CD4-positive, alpha-beta memory T cell (primary cell): ENCODE measurements at regions of chr7 and their contacts with region 1.

Region 1: DNA sequence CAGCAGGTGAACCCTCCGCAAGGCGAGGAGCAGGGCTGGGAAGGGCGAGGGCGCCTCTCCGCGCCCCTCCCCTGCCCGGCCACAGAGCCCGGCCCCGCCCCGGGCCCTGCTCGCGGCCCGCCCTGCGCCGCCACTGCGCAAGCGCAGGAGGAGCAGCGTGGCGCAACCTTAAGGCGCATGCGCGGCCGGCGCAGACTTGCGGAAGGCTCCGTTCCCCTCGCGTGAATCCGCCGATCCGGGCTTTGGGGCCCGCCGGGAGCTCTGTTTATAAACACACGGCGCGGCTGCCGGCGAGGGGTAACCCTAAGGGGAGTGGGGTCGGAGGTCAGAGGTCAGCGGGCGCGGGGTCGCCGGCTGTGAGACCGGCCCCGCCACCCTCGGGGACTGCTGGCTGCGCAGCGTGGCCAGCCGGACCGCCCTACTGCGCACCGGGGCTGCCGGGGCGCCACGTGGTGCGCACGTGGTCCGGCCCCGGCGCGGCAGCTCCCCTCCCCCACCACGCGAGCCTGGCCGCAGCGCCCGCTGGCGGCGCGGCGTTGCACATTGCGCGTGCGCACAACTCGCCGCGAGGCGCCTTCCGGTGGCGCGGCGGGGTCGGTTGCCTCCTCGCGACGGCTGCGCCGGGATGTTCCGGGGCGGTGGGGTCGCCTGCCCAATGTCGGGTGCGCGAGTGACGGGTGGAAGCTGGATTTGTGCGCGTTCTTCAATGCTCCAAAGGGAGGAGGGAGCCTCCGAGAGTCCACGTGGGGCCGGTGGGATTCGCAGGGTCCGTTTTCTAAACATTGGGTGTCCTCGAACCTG is 40.2 kb upstream of the FOXK1 start:
- DNase-seq: peak; percentile 94 to 99 (median 98)
- H3K4me3 ChIP-seq: peak overlapping the region; percentile 70 to 74
- H3K4me3 Mint-ChIP-seq: peak overlapping the region; percentile 83 to 92 (median 87)
- H3K27ac ChIP-seq: peak overlapping the region; percentile 60
- H3K27ac Mint-ChIP-seq: peak overlapping the region; percentile 93 to 97 (median 95)
- H3K4me1 ChIP-seq: peaks cover 16% of the 10 kb centered on the region
- H3K4me1 Mint-ChIP-seq: peaks cover 9 to 19% (median 14%) of the 10 kb centered on the region in 4 donors
- H3K27me3 ChIP-seq: no peaks in the 10 kb centered on the region
- H3K27me3 Mint-ChIP-seq: no peaks in the 10 kb centered on the region

Region 2: DNA sequence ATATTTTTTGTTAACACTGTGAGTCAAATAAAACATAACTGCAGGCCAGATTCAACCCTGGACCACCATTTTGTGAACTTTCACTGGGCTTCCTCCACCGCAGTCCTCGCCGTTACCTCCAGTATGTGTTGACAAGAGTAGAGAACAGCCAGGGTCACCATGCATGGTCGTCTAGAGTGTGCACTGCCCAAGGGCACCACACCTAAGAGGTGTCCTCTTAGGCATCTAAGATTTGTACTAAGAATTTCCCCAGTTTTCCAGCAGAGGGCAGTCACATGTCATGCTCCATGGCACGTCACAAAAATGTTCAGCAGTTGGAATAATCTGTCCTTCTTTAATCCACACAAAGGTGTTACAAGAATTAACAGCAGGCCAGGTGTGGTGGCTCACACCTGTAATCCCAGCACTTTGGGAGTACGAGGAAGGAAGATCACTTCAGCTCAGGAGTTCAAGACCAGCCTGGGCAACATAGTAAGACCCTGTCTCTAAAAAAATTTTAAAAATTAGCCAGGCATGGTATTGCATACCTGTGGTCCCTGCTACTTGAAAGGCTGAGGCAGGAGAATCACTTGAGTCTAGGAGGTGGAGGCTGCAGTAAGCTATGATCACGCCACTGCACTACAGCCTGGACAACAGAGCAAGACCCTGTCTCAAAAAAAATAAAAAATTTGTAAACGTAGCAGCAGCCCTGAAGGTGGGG is 30.9 kb before region 1 on chr7:
- CTCF ChIA-PET with region 1: interaction called, 10 read pairs
- POLR2A ChIA-PET with region 1: interaction called, 5 read pairs
- intact Hi-C with region 1: loop called (anchors 2 kb)
- DNase-seq: peak; percentile 62 to 73 (median 67)
- H3K4me3 ChIP-seq: no peak overlapping the region
- H3K4me3 Mint-ChIP-seq: no peak overlapping the region
- H3K27ac ChIP-seq: no peak overlapping the region
- H3K27ac Mint-ChIP-seq: peak overlapping the region in 1 of 7 donors; percentile 70
- H3K4me1 ChIP-seq: peaks cover 4% of the 10 kb centered on the region
- H3K4me1 Mint-ChIP-seq: peaks cover 7 to 13% (median 9%) of the 10 kb centered on the region in 4 donors
- H3K27me3 ChIP-seq: no peaks in the 10 kb centered on the region
- H3K27me3 Mint-ChIP-seq: peaks cover 1 to 3% of the 10 kb centered on the region in 2 donors

Region 3: DNA sequence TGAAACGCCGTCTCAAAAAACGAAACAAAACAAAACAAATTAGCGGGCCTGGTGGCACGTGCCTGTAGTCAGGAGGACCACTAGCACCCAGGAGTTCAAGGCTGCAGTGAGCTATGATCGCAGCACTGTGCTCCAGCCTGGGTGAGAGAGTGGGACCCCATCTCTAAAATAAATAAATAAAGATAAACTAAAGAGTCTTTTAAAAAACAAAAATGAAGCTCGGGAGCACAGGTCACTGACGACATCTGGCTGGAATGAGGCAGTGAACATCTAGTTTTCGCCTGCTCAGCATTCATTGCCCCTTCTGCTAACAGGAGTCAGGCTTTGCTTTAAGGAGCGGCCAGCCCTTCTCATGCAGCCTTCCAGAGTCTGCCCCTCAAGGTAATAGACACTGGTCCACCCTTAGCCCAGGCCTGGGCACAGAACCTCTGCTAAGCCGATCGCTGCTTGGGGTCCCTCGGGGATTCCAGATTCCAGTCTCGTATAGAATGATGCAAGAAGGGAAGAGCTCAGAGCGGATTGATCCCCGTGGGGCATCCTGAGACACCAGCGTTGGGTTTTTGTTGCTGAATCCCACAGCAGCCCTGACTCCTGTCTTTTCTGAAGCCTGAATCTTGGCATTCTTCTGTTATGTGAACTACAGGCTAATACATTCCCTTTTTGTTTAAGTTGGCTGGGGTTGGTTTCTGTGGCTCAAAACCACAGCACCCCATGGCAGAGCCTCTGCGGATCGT is 26.1 kb after region 1 on chr7:
- CTCF ChIA-PET with region 1: interaction called, 4 read pairs
- POLR2A ChIA-PET with region 1: interaction called, 11 read pairs
- intact Hi-C with region 1: no loop called
- DNase-seq: no peak
- H3K4me3 ChIP-seq: no peak overlapping the region
- H3K4me3 Mint-ChIP-seq: no peak overlapping the region
- H3K27ac ChIP-seq: no peak overlapping the region
- H3K27ac Mint-ChIP-seq: no peak overlapping the region
- H3K4me1 ChIP-seq: no peaks in the 10 kb centered on the region
- H3K4me1 Mint-ChIP-seq: no peaks in the 10 kb centered on the region
- H3K27me3 ChIP-seq: no peaks in the 10 kb centered on the region
- H3K27me3 Mint-ChIP-seq: peaks cover 0 to 2% of the 10 kb centered on the region in 2 donors

Region 4: GRCh38 chr7:4681886-4682620 is 40.2 kb after region 1 on chr7 and contains the start of gene FOXK1:
- CTCF ChIA-PET with region 1: interaction called, 50 read pairs
- POLR2A ChIA-PET with region 1: interaction called, 216 read pairs
- intact Hi-C with region 1: loop called (anchors 1 kb)
- DNase-seq: peak; percentile 63 to 82 (median 78)
- H3K4me3 ChIP-seq: peak within 1 kb of the TSS; percentile 59 to 73
- H3K4me3 Mint-ChIP-seq: peak within 1 kb of the TSS; percentile 90 to 100 (median 96)
- H3K27ac ChIP-seq: peak within 1 kb of the TSS; percentile 94
- H3K27ac Mint-ChIP-seq: peak within 1 kb of the TSS; percentile 90 to 98 (median 94)
- H3K4me1 ChIP-seq: peaks cover 32% of the 10 kb centered on the region
- H3K4me1 Mint-ChIP-seq: peaks cover 22 to 37% (median 28%) of the 10 kb centered on the region in 4 donors
- H3K27me3 ChIP-seq: no peaks in the 10 kb centered on the region
- H3K27me3 Mint-ChIP-seq: peaks cover 0 to 2% of the 10 kb centered on the region in 2 donors
- total RNA-seq, gene FOXK1: 52.9 to 53.3 TPM

Region 5: DNA sequence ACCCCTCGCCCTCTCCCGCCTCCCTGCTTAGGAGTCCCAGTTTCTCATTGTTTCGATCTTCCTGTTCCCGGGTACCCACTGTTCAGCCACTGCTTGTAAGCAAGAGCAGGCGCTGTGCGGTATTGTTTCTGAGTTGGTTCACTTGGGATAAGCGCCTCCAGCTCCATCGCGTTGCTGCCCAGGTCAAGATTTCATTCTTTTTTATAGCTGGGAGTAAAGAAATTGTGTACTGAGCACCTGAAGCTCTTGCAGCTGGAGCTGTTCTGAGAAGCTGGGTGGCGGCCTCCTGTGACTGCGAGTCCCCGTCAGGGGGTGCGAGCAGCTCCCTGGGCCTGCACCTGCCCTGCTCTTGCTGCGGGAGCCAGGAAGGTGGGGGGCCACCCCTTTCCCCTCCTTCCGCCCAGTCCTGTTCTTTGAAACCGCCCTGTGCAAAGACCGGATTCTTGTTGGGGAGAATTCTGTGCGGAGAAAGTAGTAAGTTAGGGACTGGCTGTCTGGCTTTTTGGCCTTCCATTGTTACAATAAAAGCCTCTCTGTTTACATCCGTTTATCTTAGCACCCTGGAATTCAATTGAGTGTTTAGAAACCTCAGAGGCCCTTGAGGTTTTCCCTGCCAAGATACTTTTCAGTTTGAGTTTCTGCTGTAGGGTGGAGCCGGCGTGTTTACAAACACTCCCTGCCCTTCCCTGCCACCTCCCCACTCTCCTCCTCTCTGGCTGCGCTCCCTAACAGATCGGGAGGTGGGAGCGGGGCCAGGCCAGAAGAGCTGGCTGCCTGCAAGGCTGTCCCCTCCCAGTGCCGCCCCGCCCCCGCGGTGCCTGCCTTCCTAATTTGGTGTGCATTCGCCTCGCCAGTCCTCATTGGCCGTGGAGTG is 102.8 kb after region 1 on chr7:
- CTCF ChIA-PET with region 1: interaction called, 9 read pairs
- POLR2A ChIA-PET with region 1: interaction called, 47 read pairs
- intact Hi-C with region 1: loop called (anchors 2 kb)
- DNase-seq: peak; percentile 75 to 84 (median 80)
- H3K4me3 ChIP-seq: peak overlapping the region; percentile 20 to 59
- H3K4me3 Mint-ChIP-seq: peak overlapping the region; percentile 80 to 91 (median 87)
- H3K27ac ChIP-seq: peak overlapping the region; percentile 63
- H3K27ac Mint-ChIP-seq: peak overlapping the region; percentile 86 to 99 (median 95)
- H3K4me1 ChIP-seq: peaks cover 66% of the 10 kb centered on the region
- H3K4me1 Mint-ChIP-seq: peaks cover 41 to 76% (median 58%) of the 10 kb centered on the region in 4 donors
- H3K27me3 ChIP-seq: no peaks in the 10 kb centered on the region
- H3K27me3 Mint-ChIP-seq: no peaks in the 10 kb centered on the region

Region 6: GRCh38 chr7:4753711-4754432 is 112.0 kb after region 1 on chr7:
- CTCF ChIA-PET with region 1: interaction called, 5 read pairs
- POLR2A ChIA-PET with region 1: interaction called, 8 read pairs
- intact Hi-C with region 1: loop called (anchors 1 kb)
- DNase-seq: peak; percentile 77 to 79 (median 78)
- H3K4me3 ChIP-seq: no peak overlapping the region
- H3K4me3 Mint-ChIP-seq: peak overlapping the region in 1 of 8 donors; percentile 29
- H3K27ac ChIP-seq: no peak overlapping the region
- H3K27ac Mint-ChIP-seq: peak overlapping the region in 4 of 7 donors; percentile 22 to 77 (median 35)
- H3K4me1 ChIP-seq: peaks cover 22% of the 10 kb centered on the region
- H3K4me1 Mint-ChIP-seq: peaks cover 11 to 25% (median 15%) of the 10 kb centered on the region in 4 donors
- H3K27me3 ChIP-seq: no peaks in the 10 kb centered on the region
- H3K27me3 Mint-ChIP-seq: no peaks in the 10 kb centered on the region

Region 7: DNA sequence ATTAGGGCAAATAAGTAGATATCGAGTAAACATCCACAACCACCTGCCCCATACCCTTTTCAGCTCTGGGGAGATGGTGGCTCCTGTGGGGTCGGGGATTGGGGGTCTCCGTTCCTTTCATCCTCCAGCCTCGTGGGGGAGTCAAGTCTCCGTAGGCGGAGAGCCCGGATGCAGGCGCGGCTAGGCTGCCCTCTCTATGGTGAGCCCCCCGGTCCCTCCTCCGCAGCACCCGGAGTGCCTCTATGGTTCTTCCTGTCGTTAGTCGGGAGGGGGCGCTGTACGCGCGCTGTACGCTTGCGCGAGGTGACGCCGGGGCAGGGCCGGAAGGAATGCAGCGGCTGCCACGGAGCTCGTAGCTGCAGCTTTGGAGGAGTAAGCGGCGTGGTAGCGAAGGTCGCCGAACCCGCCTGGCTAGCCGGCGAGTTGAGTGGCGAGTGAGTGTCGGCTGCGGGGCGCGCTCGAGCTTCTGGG is 331.9 kb after region 1 on chr7:
- CTCF ChIA-PET with region 1: no interaction called
- POLR2A ChIA-PET with region 1: interaction called, 3 read pairs
- intact Hi-C with region 1: loop called (anchors 10 kb)
- DNase-seq: peak; percentile 91 to 95 (median 94)
- H3K4me3 ChIP-seq: peak overlapping the region in 1 of 2 donors; percentile 74
- H3K4me3 Mint-ChIP-seq: peak overlapping the region; percentile 94 to 99 (median 98)
- H3K27ac ChIP-seq: peak overlapping the region; percentile 64
- H3K27ac Mint-ChIP-seq: peak overlapping the region; percentile 93 to 99 (median 97)
- H3K4me1 ChIP-seq: peaks cover 16% of the 10 kb centered on the region
- H3K4me1 Mint-ChIP-seq: peaks cover 19 to 37% (median 28%) of the 10 kb centered on the region in 4 donors
- H3K27me3 ChIP-seq: no peaks in the 10 kb centered on the region
- H3K27me3 Mint-ChIP-seq: no peaks in the 10 kb centered on the region